ENCODE measurements at regions of chr6 and their contacts with region 1.

Region 1: GRCh38 chr6:16684896-16685554 is 76.2 kb downstream of the ATXN1 start:
- DNase-seq: peak; percentile 85
- H3K4me3 Mint-ChIP-seq: no peak overlapping the region
- H3K27ac Mint-ChIP-seq: no peak overlapping the region
- H3K4me1 Mint-ChIP-seq: peaks cover 48% of the 10 kb centered on the region
- H3K27me3 Mint-ChIP-seq: no peaks in the 10 kb centered on the region
- CTCF ChIP-seq: no peak

Region 2: GRCh38 chr6:16296061-16296670 is 388.9 kb before region 1 on chr6:
- CTCF ChIA-PET with region 1: no interaction called
- POLR2A ChIA-PET with region 1: no interaction called
- intact Hi-C with region 1: no loop called
- DNase-seq: no peak
- H3K4me3 Mint-ChIP-seq: no peak overlapping the region
- H3K27ac Mint-ChIP-seq: no peak overlapping the region
- H3K4me1 Mint-ChIP-seq: no peaks in the 10 kb centered on the region
- H3K27me3 Mint-ChIP-seq: no peaks in the 10 kb centered on the region
- CTCF ChIP-seq: no peak

Region 3: DNA sequence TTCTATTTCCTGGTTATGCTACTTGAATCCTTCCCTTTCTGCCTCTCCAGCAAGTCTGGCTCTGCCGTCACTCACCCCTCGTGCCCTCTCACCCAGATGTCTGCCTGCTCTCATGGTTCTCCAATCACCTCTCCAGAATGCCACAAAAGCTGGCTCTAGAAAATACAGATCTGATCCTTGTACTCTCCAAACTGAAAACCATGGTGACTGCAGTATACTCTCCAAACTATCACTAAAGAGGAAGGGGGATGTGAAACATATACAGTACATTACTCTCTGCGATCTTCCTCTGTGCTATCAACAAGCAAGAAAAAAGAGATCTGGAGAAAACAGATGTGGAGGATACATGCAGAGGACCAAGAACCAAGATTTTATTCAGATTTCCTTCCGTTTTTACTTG is 14.8 kb before region 1 on chr6:
- CTCF ChIA-PET with region 1: no interaction called
- POLR2A ChIA-PET with region 1: interaction called, 10 read pairs
- intact Hi-C with region 1: no loop called
- DNase-seq: no peak
- H3K4me3 Mint-ChIP-seq: no peak overlapping the region
- H3K27ac Mint-ChIP-seq: peak overlapping the region; percentile 63
- H3K4me1 Mint-ChIP-seq: peaks cover 33% of the 10 kb centered on the region
- H3K27me3 Mint-ChIP-seq: no peaks in the 10 kb centered on the region
- CTCF ChIP-seq: no peak

Region 4: GRCh38 chr6:16698997-16699868 is 14.2 kb after region 1 on chr6:
- CTCF ChIA-PET with region 1: interaction called, 4 read pairs
- POLR2A ChIA-PET with region 1: interaction called, 45 read pairs
- intact Hi-C with region 1: no loop called
- DNase-seq: peak; percentile 24
- H3K4me3 Mint-ChIP-seq: no peak overlapping the region
- H3K27ac Mint-ChIP-seq: peak overlapping the region; percentile 61
- H3K4me1 Mint-ChIP-seq: peaks cover 36% of the 10 kb centered on the region
- H3K27me3 Mint-ChIP-seq: no peaks in the 10 kb centered on the region
- CTCF ChIP-seq: no peak

Region 5: DNA sequence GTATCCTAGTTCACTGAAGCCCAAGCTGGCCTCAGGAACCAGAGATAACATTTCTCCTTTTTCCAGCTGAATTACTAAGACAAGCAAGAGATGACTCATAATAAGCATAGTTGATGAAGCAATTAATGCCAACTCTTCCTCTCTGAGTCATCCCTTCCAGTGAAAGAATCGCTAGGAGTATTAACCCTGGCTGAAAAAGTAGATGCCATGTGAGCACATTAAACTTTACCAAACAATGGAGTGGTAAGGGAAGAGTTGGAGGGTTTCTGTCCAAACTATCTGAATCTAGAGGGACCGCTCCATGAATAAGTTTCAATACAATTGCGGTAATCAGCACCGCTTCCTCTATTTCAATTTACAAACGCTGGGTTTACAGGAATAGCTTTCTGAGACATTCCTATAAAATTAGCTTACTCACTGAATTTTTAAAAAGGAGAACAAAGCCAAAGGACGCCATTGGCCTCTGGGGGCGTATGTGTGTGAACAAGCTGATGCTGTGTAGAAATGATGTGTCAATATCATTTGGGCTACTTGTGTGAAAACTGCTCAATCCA is 28.0 kb after region 1 on chr6:
- CTCF ChIA-PET with region 1: interaction called, 22 read pairs
- POLR2A ChIA-PET with region 1: interaction called, 18 read pairs
- intact Hi-C with region 1: no loop called
- DNase-seq: peak; percentile 95
- H3K4me3 Mint-ChIP-seq: peak overlapping the region; percentile 63
- H3K27ac Mint-ChIP-seq: peak overlapping the region; percentile 96
- H3K4me1 Mint-ChIP-seq: peaks cover 28% of the 10 kb centered on the region
- H3K27me3 Mint-ChIP-seq: no peaks in the 10 kb centered on the region
- CTCF ChIP-seq: no peak

Region 6: GRCh38 chr6:16729183-16729691 is 44.2 kb after region 1 on chr6:
- CTCF ChIA-PET with region 1: interaction called, 5 read pairs
- POLR2A ChIA-PET with region 1: interaction called, 127 read pairs
- intact Hi-C with region 1: loop called (anchors 2 kb)
- DNase-seq: peak; percentile 59
- H3K4me3 Mint-ChIP-seq: no peak overlapping the region
- H3K27ac Mint-ChIP-seq: peak overlapping the region; percentile 71
- H3K4me1 Mint-ChIP-seq: peaks cover 26% of the 10 kb centered on the region
- H3K27me3 Mint-ChIP-seq: no peaks in the 10 kb centered on the region
- CTCF ChIP-seq: no peak

Region 7: DNA sequence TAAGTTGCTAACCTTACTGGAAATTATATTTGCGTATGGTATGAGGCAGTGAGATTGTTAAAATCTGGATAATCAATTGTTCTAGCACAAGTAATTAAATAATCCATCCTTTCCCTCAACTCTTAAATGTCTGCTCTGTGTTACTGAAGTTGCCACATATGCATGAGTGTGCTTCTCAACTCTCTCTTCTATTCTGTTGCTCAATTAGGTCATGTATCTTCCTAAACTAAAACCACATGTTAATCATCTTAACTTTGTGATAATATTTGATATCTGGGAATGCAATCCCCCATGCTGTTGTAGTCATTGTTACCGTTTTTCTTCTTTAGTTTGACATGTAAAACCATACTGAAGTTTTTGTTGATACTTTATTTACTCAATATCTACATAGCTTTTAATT is 353.3 kb after region 1 on chr6:
- CTCF ChIA-PET with region 1: no interaction called
- POLR2A ChIA-PET with region 1: no interaction called
- intact Hi-C with region 1: no loop called
- DNase-seq: no peak
- H3K4me3 Mint-ChIP-seq: no peak overlapping the region
- H3K27ac Mint-ChIP-seq: no peak overlapping the region
- H3K4me1 Mint-ChIP-seq: peaks cover 16% of the 10 kb centered on the region
- H3K27me3 Mint-ChIP-seq: peaks cover 25% of the 10 kb centered on the region
- CTCF ChIP-seq: no peak